Calu3 (cell line): ENCODE measurements at regions of chr3 and their contacts with region 1.

Region 1: DNA sequence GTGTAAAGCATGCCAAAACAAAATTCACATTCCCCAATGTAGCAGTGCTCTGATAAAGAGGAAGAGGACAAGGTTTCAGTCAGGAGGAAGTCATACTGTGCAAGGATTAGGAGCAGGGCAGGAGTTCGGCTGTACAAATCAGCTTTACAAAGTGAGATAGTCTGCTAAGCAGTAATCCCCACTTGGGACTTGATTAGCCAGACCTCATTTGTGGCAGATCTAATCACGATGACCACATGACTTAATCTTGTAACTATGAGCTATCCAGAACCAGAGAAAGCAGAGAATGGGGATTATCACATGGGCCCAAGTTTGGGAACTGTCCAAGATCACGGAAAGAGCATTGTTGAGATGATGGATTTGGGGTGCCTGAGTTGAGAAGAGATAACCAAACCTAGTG is 7.8 kb downstream of the DCBLD2 start:
- DNase-seq: no peak
- H3K4me3 Mint-ChIP-seq: no peak overlapping the region
- H3K27ac Mint-ChIP-seq: peak overlapping the region; percentile 53
- H3K4me1 Mint-ChIP-seq: peaks cover 26% of the 10 kb centered on the region
- H3K27me3 Mint-ChIP-seq: no peaks in the 10 kb centered on the region
- CTCF ChIP-seq: no peak

Region 2: DNA sequence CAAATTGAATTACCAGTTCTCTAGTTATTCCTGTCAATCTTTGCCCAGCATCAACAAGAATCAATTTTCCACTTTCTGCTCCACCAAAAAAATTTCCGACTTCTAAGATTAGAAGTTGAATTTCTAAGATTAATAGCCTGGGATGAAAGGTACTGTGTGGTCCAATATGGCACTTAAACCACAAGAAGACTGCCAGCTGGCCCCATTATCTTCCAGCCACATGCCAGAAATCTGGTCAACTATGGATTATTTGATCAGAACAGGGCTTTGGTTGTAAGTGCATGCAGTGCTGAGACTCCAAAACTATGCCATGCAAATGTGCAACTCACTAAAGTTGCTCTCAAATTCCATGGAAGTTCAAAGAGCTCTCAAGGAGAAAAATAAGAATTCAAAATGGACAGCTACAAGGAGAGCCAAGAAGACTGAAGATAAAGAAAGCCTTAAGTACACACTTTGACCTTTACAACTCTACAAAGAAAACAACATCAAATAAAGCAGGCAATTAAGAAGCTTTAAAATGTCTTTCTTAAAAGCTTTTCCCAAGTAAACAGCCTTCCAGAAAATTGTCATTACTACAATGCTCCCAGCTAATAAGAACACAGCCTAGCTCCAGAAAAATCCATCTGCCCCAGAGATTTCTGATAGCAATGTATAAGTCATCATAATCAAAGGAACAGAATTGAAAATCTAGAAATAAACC is 66.4 kb before region 1 on chr3:
- CTCF ChIA-PET with region 1: no interaction called
- intact Hi-C with region 1: loop called (anchors 5 kb)
- DNase-seq: no peak
- H3K4me3 Mint-ChIP-seq: no peak overlapping the region
- H3K27ac Mint-ChIP-seq: no peak overlapping the region
- H3K4me1 Mint-ChIP-seq: peaks cover 28% of the 10 kb centered on the region
- H3K27me3 Mint-ChIP-seq: no peaks in the 10 kb centered on the region
- CTCF ChIP-seq: no peak

Region 3: DNA sequence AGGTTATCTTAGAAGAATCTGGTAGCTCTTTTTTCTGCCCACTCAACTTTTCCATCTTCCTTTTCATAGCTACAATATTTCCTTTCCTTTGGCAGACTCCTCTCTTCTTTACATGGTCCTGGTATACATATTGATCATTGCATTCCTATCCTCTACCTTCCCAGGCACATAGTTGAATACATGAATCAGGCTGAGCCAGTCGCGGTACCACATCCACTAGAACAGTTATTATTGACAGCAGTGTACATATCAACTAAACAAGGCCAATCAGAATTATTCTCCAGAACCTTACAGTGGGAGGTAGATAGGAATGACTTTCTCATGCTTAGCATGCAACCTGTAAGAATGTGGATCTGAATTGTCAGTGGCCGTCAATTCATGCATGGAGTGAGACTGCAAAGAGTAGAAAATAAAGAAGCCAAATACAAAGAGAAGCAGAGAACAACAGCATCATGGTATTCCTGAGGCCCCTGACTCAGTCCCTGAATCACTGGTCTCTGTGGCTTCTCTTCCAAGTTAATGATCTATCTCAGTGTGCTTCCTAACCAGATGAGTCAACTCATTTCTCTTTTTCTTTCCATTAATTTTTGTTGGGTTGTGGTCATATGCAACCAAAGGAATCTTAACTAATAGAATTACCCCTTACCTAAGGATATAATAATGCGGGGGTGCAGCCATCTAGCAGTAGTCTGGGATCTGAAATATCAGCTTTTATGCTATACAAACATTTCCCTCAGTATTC is 68.6 kb after region 1 on chr3:
- CTCF ChIA-PET with region 1: no interaction called
- intact Hi-C with region 1: loop called (anchors 5 kb)
- DNase-seq: peak; percentile 48
- H3K4me3 Mint-ChIP-seq: no peak overlapping the region
- H3K27ac Mint-ChIP-seq: no peak overlapping the region
- H3K4me1 Mint-ChIP-seq: peaks cover 13% of the 10 kb centered on the region
- H3K27me3 Mint-ChIP-seq: no peaks in the 10 kb centered on the region
- CTCF ChIP-seq: no peak

Region 4: DNA sequence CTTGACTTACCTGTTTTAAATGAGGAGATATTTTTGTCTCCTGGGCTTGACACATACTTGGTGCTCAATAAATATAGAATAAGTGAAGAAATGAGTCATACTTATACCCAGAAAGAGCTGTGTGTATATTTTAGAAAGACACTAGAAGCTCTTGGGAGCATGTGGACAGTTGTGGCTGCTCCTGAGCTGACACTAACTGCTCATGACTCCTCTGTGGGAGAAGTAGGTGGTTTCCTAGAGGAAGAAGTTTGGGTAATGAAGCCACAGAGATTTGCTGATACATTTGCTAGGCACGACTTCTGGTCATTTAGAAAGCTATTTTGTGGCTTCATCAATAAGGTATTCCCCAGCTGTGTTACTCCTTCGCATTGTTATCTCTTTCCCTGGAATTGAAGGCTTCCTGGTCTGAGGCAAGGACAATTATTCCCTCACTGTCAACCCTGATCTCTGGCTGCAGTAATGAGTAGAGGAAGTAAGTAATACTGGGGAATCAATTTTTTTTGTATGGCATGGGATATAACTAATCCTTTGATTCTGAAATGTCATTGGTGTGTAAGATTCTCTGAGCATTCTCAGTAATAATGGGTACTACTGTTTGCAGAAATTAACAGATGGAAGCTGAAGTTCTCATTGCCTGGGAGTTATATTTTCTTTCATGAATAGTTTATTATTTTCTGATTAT is 87.3 kb after region 1 on chr3:
- CTCF ChIA-PET with region 1: no interaction called
- intact Hi-C with region 1: loop called (anchors 2 kb)
- DNase-seq: no peak
- H3K4me3 Mint-ChIP-seq: peak overlapping the region; percentile 30
- H3K27ac Mint-ChIP-seq: peak overlapping the region; percentile 54
- H3K4me1 Mint-ChIP-seq: peaks cover 60% of the 10 kb centered on the region
- H3K27me3 Mint-ChIP-seq: no peaks in the 10 kb centered on the region
- CTCF ChIP-seq: no peak